Left lung (tissue), 14 donors: ENCODE measurements at regions of chr13 and their contacts with region 1.

Region 1: GRCh38 chr13:85806553-85807175 is 7.4 kb upstream of the SLITRK6 start:
- DNase-seq: peak in 2 of 4 donors; percentile 40 to 66
- ATAC-seq: peak; percentile 64
- H3K4me3 ChIP-seq: no peak overlapping the region
- H3K27ac ChIP-seq: no peak overlapping the region
- H3K4me1 ChIP-seq: no peaks in the 10 kb centered on the region
- H3K27me3 ChIP-seq: no peaks in the 10 kb centered on the region
- CTCF ChIP-seq: peak; percentile 51 to 56

Region 2: DNA sequence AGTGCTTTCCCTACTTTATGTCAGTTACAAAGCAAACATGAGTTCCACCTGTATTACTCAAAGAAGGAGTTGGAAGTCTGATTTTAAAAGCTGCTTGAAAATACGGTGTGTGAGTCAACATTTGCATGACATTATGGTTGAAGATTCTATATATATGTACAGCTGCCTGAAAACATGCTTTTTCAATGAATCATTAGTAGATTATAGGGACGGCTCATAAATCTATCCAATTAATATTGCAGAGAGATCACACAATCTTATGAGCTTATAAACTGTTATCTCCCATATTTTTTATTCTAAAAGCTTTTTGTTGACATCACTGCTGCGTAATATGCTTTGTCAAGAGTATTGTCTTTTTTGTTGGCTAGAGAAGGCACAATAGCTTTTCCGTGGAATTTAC is 881.2 kb before region 1 on chr13:
- intact Hi-C with region 1: loop called in 1 of 2 experiments (anchors 10 kb)
- DNase-seq: no peak
- ATAC-seq: no peak
- H3K4me3 ChIP-seq: no peak overlapping the region
- H3K27ac ChIP-seq: no peak overlapping the region
- H3K4me1 ChIP-seq: no peaks in the 10 kb centered on the region
- H3K27me3 ChIP-seq: no peaks in the 10 kb centered on the region
- CTCF ChIP-seq: no peak

Region 3: DNA sequence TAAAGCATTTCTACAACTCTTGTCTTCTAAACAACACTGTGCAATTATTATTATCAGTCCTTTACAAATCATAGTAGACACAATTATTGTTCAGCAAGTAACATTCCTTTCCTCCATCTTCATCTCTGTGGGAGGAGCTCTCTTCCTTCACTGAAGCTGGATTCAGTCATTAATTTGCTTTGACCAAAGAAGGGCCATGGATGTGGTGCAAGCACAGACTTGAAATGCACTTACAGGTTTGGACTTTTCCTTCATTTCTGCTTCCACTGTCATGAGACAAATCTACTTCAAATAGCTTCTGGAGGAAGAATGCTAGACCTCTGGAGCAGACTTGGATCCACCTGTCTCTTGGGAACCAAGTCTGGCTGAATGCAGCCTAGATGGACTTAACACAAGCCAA is 329.2 kb after region 1 on chr13:
- intact Hi-C with region 1: no loop called
- DNase-seq: no peak
- ATAC-seq: no peak
- H3K4me3 ChIP-seq: no peak overlapping the region
- H3K27ac ChIP-seq: no peak overlapping the region
- H3K4me1 ChIP-seq: no peaks in the 10 kb centered on the region
- H3K27me3 ChIP-seq: no peaks in the 10 kb centered on the region
- CTCF ChIP-seq: no peak

Region 4: DNA sequence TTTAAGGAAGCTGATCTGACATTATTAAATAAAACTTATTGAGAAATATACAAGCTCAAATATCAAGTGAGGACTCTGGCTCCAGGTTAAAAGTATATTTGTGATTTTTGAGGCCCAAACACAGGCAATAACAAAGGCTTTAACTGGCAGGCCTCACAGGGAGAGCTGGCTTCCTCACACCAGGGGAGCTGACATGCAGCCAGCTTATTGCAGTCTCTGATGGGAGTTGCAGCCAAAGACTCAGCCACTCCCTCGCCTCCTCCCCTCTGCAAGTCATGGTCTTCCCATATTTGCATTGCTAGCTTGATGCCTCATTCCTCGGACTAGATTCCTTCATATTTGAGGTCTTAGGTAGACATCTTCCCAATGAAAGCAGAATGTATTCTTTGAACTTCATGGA is 639.6 kb after region 1 on chr13:
- intact Hi-C with region 1: no loop called
- DNase-seq: peak in 1 of 4 donors; percentile 19
- ATAC-seq: no peak
- H3K4me3 ChIP-seq: no peak overlapping the region
- H3K27ac ChIP-seq: no peak overlapping the region
- H3K4me1 ChIP-seq: no peaks in the 10 kb centered on the region
- H3K27me3 ChIP-seq: no peaks in the 10 kb centered on the region
- CTCF ChIP-seq: no peak